Activated naive CD4-positive, alpha-beta T cell treated with anti-CD3 and anti-CD28 coated beads for 36 hours (primary cell): ENCODE measurements at regions of chrX and their contacts with region 1.

Region 1: GRCh38 chrX:46140272-46140671 is 404.9 kb downstream of the ZNF674 start:
- DNase-seq: peak; percentile 46
- H3K4me3 Mint-ChIP-seq: no peak overlapping the region
- H3K27ac Mint-ChIP-seq: peak overlapping the region; percentile 69
- H3K4me1 Mint-ChIP-seq: peaks cover 16% of the 10 kb centered on the region
- H3K27me3 Mint-ChIP-seq: no peaks in the 10 kb centered on the region

Region 2: DNA sequence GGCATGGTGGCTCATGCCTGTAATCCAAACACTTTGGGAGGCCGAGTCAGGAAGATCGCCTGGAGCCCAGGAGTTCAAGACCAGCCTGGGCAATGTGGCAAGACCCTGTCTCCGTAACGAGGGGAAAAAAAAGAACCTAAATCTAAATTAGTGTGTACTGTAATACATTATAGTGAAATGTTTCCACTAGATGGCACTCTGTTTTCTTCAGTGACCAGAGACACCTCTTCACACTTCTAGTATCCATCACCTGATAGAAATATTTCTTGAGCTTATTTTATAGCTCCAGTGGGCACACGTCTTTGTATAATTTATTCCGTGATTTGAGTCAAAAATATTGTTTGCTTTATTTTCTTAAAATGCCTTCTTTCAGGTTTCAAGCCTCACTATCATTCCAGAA is 338.7 kb before region 1 on chrX:
- CTCF ChIA-PET with region 1: no interaction called
- intact Hi-C with region 1: loop called (anchors 10 kb)
- DNase-seq: no peak
- H3K4me3 Mint-ChIP-seq: no peak overlapping the region
- H3K27ac Mint-ChIP-seq: peak overlapping the region; percentile 70
- H3K4me1 Mint-ChIP-seq: peaks cover 75% of the 10 kb centered on the region
- H3K27me3 Mint-ChIP-seq: no peaks in the 10 kb centered on the region

Region 3: GRCh38 chrX:46208225-46208854 is 68.1 kb after region 1 on chrX:
- CTCF ChIA-PET with region 1: no interaction called
- intact Hi-C with region 1: no loop called
- DNase-seq: peak; percentile 4
- H3K4me3 Mint-ChIP-seq: no peak overlapping the region
- H3K27ac Mint-ChIP-seq: no peak overlapping the region
- H3K4me1 Mint-ChIP-seq: peaks cover 31% of the 10 kb centered on the region
- H3K27me3 Mint-ChIP-seq: no peaks in the 10 kb centered on the region

Region 4: GRCh38 chrX:46228389-46228788 is 88.1 kb after region 1 on chrX:
- CTCF ChIA-PET with region 1: no interaction called
- intact Hi-C with region 1: no loop called
- DNase-seq: no peak
- H3K4me3 Mint-ChIP-seq: no peak overlapping the region
- H3K27ac Mint-ChIP-seq: no peak overlapping the region
- H3K4me1 Mint-ChIP-seq: no peaks in the 10 kb centered on the region
- H3K27me3 Mint-ChIP-seq: no peaks in the 10 kb centered on the region

Region 5: GRCh38 chrX:46279925-46280313 is 139.6 kb after region 1 on chrX:
- CTCF ChIA-PET with region 1: no interaction called
- intact Hi-C with region 1: loop called (anchors 5 kb)
- DNase-seq: no peak
- H3K4me3 Mint-ChIP-seq: no peak overlapping the region
- H3K27ac Mint-ChIP-seq: peak overlapping the region; percentile 72
- H3K4me1 Mint-ChIP-seq: peaks cover 24% of the 10 kb centered on the region
- H3K27me3 Mint-ChIP-seq: no peaks in the 10 kb centered on the region

Region 6: GRCh38 chrX:46408553-46409407 is 268.5 kb after region 1 on chrX:
- CTCF ChIA-PET with region 1: no interaction called
- intact Hi-C with region 1: no loop called
- DNase-seq: peak; percentile 81
- H3K4me3 Mint-ChIP-seq: no peak overlapping the region
- H3K27ac Mint-ChIP-seq: no peak overlapping the region
- H3K4me1 Mint-ChIP-seq: no peaks in the 10 kb centered on the region
- H3K27me3 Mint-ChIP-seq: no peaks in the 10 kb centered on the region